K562 (cell line): ENCODE measurements at regions of chr15 and their contacts with region 1.

Region 1: GRCh38 chr15:66581972-66582537 is 16.3 kb upstream of the LCTL start:
- DNase-seq: peak in 2 of 4 experiments; percentile 26 to 88
- ATAC-seq: peak; percentile 66
- H3K4me3 ChIP-seq: peak overlapping the region; percentile 62
- H3K27ac ChIP-seq: peak overlapping the region; percentile 89
- H3K4me1 ChIP-seq: peaks cover 11 to 24% of the 10 kb centered on the region in 2 experiments
- H3K27me3 ChIP-seq: no peaks in the 10 kb centered on the region
- CTCF ChIP-seq: no peak
- EP300 ChIP-seq: no peak
- POLR2A ChIP-seq: peak; percentile 100
- RAD21 ChIP-seq: no peak

Region 2: GRCh38 chr15:66514586-66514985 is 67.5 kb before region 1 on chr15:
- CTCF ChIA-PET with region 1: no interaction called
- POLR2A ChIA-PET with region 1: no interaction called
- in situ Hi-C with region 1: no loop called
- intact Hi-C with region 1: no loop called
- DNase-seq: no peak
- ATAC-seq: no peak
- H3K4me3 ChIP-seq: no peak overlapping the region
- H3K27ac ChIP-seq: no peak overlapping the region
- H3K4me1 ChIP-seq: no peaks in the 10 kb centered on the region
- H3K27me3 ChIP-seq: no peaks in the 10 kb centered on the region
- CTCF ChIP-seq: no peak
- EP300 ChIP-seq: no peak
- POLR2A ChIP-seq: no peak
- RAD21 ChIP-seq: no peak

Region 3: DNA sequence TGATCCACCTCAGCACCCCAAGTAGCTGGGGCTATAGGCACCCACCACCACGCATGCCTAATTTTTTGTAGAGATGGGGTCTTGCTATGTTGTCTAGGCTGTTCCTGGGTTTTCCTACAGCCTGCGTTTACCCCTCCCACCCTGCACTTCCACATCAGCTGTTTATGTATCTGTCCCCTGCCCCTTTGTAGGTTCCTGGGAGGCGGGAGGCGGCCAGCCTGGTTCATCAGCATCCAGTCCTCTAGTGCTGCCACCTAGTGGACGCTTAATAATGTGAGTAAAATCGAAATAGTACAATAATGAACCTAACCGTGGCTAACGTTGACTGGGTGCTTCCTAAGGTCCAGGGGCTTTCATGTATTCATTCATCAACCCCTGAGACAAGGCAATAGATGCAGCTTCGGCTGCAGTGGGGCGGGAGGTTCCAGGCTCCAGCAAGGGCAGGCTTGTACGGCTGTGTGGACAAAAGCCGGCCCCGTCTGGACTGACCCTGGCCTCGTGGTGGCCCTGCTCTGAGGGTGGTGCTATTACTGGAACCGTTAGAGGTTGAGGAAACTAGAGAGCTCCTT is 15.0 kb before region 1 on chr15:
- CTCF ChIA-PET with region 1: no interaction called
- POLR2A ChIA-PET with region 1: interaction called, 23 read pairs
- in situ Hi-C with region 1: no loop called
- intact Hi-C with region 1: no loop called
- DNase-seq: peak; percentile 82 to 88 (median 82)
- ATAC-seq: peak; percentile 91
- H3K4me3 ChIP-seq: no peak overlapping the region
- H3K27ac ChIP-seq: no peak overlapping the region; the same call in 1 of the 3 replicates
- H3K4me1 ChIP-seq: peaks cover 5 to 24% of the 10 kb centered on the region in 2 experiments; a peak in 3 of 5 replicates
- H3K27me3 ChIP-seq: no peaks in the 10 kb centered on the region
- CTCF ChIP-seq: peak; percentile 74 to 87 (median 74)
- EP300 ChIP-seq: no peak
- POLR2A ChIP-seq: no peak
- RAD21 ChIP-seq: peak in 1 of 2 experiments; percentile 49; a peak in 2 of 4 replicates

Region 4: GRCh38 chr15:66595931-66596545 is 14.0 kb after region 1 on chr15:
- CTCF ChIA-PET with region 1: no interaction called
- POLR2A ChIA-PET with region 1: interaction called, 14 read pairs
- in situ Hi-C with region 1: no loop called
- intact Hi-C with region 1: no loop called
- DNase-seq: no peak
- ATAC-seq: no peak
- H3K4me3 ChIP-seq: no peak overlapping the region
- H3K27ac ChIP-seq: no peak overlapping the region
- H3K4me1 ChIP-seq: peaks cover 16 to 24% of the 10 kb centered on the region in 2 experiments; a peak in 4 of 5 replicates
- H3K27me3 ChIP-seq: no peaks in the 10 kb centered on the region
- CTCF ChIP-seq: no peak
- EP300 ChIP-seq: no peak
- POLR2A ChIP-seq: no peak
- RAD21 ChIP-seq: no peak

Region 5: GRCh38 chr15:66994927-66995656 is 413.0 kb after region 1 on chr15:
- CTCF ChIA-PET with region 1: no interaction called
- POLR2A ChIA-PET with region 1: no interaction called
- in situ Hi-C with region 1: no loop called
- intact Hi-C with region 1: no loop called
- DNase-seq: peak in 1 of 4 experiments; percentile 3
- ATAC-seq: no peak
- H3K4me3 ChIP-seq: no peak overlapping the region
- H3K27ac ChIP-seq: no peak overlapping the region
- H3K4me1 ChIP-seq: peaks cover 0 to 3% of the 10 kb centered on the region in 2 experiments; a peak in 3 of 5 replicates
- H3K27me3 ChIP-seq: peaks cover 0 to 2% of the 10 kb centered on the region in 2 experiments; a peak in 1 of 5 replicates
- CTCF ChIP-seq: no peak
- EP300 ChIP-seq: no peak
- POLR2A ChIP-seq: no peak
- RAD21 ChIP-seq: no peak

Region 6: DNA sequence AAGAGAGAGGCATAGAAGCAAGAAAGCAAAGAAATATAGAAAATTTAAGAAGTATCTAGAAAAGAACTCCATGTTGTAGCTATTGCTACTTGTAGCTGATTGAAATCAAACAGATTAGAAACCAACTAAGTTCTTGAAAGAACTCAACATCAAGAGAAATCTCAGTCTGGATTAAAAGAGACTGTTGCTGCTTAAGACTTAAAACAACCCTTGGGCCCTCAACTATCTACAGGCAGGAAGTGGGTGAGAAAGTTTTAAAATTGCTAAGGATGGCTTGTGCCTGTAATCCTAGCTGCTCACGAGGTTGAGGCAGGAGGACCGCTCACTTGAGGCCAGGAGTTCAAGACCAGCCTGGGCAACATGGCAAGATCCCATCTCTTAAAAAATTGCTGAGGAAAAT is 899.6 kb after region 1 on chr15:
- CTCF ChIA-PET with region 1: no interaction called
- POLR2A ChIA-PET with region 1: no interaction called
- in situ Hi-C with region 1: no loop called
- intact Hi-C with region 1: no loop called
- DNase-seq: no peak
- ATAC-seq: no peak
- H3K4me3 ChIP-seq: no peak overlapping the region
- H3K27ac ChIP-seq: no peak overlapping the region
- H3K4me1 ChIP-seq: no peaks in the 10 kb centered on the region
- H3K27me3 ChIP-seq: peaks cover 3 to 6% of the 10 kb centered on the region in 2 experiments; a peak in 3 of 5 replicates
- CTCF ChIP-seq: no peak
- EP300 ChIP-seq: no peak
- POLR2A ChIP-seq: no peak
- RAD21 ChIP-seq: no peak